Heart left ventricle (tissue), 16 donors: ENCODE measurements at regions of chr6 and their contacts with region 1.

Region 1: GRCh38 chr6:40328405-40328987 is 258.7 kb downstream of the LRFN2 start:
- DNase-seq: no peak
- ATAC-seq: peak; percentile 25 to 51 (median 40)
- H3K4me3 ChIP-seq: no peak overlapping the region
- H3K27ac ChIP-seq: no peak overlapping the region
- H3K4me1 ChIP-seq: peaks cover 0 to 14% (median 4%) of the 10 kb centered on the region in 12 donors
- H3K27me3 ChIP-seq: peaks cover 0 to 44% (median 6%) of the 10 kb centered on the region in 9 donors
- CTCF ChIP-seq: peak; percentile 24 to 61 (median 44)
- POLR2A ChIP-seq: no peak

Region 2: GRCh38 chr6:40387127-40387870 is 58.8 kb after region 1 on chr6:
- intact Hi-C with region 1: no loop called
- DNase-seq: no peak
- ATAC-seq: no peak
- H3K4me3 ChIP-seq: no peak overlapping the region
- H3K27ac ChIP-seq: no peak overlapping the region
- H3K4me1 ChIP-seq: no peaks in the 10 kb centered on the region
- H3K27me3 ChIP-seq: peaks cover 0 to 38% (median 4%) of the 10 kb centered on the region in 9 donors
- CTCF ChIP-seq: no peak
- POLR2A ChIP-seq: no peak

Region 3: DNA sequence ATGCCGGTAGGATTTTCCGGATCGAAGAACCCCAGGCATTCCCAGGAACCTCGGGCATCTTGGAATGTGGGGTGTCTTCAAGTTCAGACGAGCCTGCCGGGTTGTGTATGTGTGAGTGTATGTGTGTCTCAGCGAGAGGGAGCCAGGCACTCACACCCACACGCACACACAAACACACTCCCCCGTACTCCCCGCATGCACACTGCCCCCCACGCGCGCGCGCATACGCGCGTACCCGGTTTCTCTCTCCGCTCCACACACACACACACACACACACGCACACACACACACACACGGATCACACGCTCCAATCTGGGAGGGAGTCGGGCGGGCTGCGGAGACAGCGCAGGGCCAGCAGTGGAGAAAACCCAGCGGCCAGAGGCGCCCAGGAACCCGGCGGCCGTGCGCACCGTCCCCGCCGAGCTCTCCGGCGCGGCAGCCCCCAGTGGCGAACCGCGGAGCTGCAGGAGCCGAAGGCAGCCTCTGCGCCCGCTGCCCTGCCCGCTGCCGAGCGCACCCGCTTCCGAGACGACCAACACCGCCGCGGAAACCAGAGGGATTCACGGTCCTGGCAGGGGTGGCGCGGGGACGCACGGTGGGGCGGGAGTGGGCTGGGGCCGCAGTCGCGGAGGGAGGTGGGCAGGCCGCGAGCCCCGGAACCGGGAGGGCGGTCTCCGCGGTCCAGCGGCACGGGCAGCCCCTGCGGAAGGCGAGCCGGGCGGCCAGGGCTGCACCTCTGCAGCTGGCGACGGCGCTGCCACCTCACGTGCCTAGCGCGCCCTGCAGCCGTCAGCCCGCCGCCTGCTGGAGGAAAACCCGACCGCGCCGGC is 259.0 kb after region 1 on chr6 and contains the start of gene LRFN2:
- intact Hi-C with region 1: loop called in 5 of 10 experiments (anchors 2 to 10 kb)
- DNase-seq: peak; percentile 49 to 83 (median 61)
- ATAC-seq: peak; percentile 48 to 97 (median 89)
- H3K4me3 ChIP-seq: peak within 1 kb of the TSS in 11 of 12 donors; percentile 11 to 51 (median 40)
- H3K27ac ChIP-seq: no peak within 1 kb of the TSS
- H3K4me1 ChIP-seq: peaks cover 0 to 21% (median 7%) of the 10 kb centered on the region in 12 donors
- H3K27me3 ChIP-seq: peaks cover 7 to 94% (median 31%) of the 10 kb centered on the region in 9 donors
- CTCF ChIP-seq: peak in 11 of 12 donors; percentile 29 to 73 (median 60)
- POLR2A ChIP-seq: no peak
- total RNA-seq, gene LRFN2: not detected

Region 4: DNA sequence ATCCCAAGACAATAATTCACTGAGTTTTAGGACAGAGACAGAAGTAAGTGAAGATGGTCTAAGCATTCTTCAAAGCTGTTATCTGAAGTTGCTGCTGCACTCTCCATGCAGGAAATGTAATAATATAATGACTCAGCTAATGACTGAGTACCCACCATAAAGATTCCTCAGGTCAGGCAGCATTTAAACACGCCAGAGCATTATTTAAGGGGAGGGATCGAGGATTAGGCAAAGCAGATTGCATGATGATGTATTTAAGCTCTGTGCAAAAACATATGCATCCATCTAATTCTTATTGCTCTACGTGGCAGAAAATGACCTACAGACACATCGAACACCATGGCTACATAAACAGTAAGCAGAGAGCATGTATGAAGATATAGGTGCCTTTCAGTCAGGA is 494.1 kb after region 1 on chr6:
- intact Hi-C with region 1: loop called in 1 of 10 experiments (anchors 10 kb)
- DNase-seq: no peak
- ATAC-seq: no peak
- H3K4me3 ChIP-seq: no peak overlapping the region
- H3K27ac ChIP-seq: no peak overlapping the region
- H3K4me1 ChIP-seq: peaks cover 0 to 8% (median 0%) of the 10 kb centered on the region in 12 donors
- H3K27me3 ChIP-seq: peaks cover 0 to 2% (median 0%) of the 10 kb centered on the region in 9 donors
- CTCF ChIP-seq: no peak
- POLR2A ChIP-seq: no peak

Region 5: GRCh38 chr6:40832691-40833090 is 504.2 kb after region 1 on chr6:
- intact Hi-C with region 1: loop called in 3 of 10 experiments (anchors 10 kb)
- DNase-seq: no peak
- ATAC-seq: peak in 3 of 4 donors; percentile 26 to 68 (median 31)
- H3K4me3 ChIP-seq: no peak overlapping the region
- H3K27ac ChIP-seq: no peak overlapping the region
- H3K4me1 ChIP-seq: no peaks in the 10 kb centered on the region
- H3K27me3 ChIP-seq: peaks cover 0 to 16% (median 0%) of the 10 kb centered on the region in 9 donors
- CTCF ChIP-seq: no peak
- POLR2A ChIP-seq: no peak

Region 6: GRCh38 chr6:40845553-40845952 is 517.1 kb after region 1 on chr6:
- intact Hi-C with region 1: loop called in 2 of 10 experiments (anchors 10 kb)
- DNase-seq: peak in 3 of 5 donors; percentile 19 to 36 (median 20)
- ATAC-seq: peak in 1 of 4 donors; percentile 50
- H3K4me3 ChIP-seq: no peak overlapping the region
- H3K27ac ChIP-seq: no peak overlapping the region
- H3K4me1 ChIP-seq: peaks cover 0 to 13% (median 0%) of the 10 kb centered on the region in 12 donors
- H3K27me3 ChIP-seq: peaks cover 0 to 14% (median 0%) of the 10 kb centered on the region in 9 donors
- CTCF ChIP-seq: peak; percentile 31 to 63 (median 46)
- POLR2A ChIP-seq: no peak